ENCODE measurements at regions of chr5 and their contacts with region 1.

Region 1: DNA sequence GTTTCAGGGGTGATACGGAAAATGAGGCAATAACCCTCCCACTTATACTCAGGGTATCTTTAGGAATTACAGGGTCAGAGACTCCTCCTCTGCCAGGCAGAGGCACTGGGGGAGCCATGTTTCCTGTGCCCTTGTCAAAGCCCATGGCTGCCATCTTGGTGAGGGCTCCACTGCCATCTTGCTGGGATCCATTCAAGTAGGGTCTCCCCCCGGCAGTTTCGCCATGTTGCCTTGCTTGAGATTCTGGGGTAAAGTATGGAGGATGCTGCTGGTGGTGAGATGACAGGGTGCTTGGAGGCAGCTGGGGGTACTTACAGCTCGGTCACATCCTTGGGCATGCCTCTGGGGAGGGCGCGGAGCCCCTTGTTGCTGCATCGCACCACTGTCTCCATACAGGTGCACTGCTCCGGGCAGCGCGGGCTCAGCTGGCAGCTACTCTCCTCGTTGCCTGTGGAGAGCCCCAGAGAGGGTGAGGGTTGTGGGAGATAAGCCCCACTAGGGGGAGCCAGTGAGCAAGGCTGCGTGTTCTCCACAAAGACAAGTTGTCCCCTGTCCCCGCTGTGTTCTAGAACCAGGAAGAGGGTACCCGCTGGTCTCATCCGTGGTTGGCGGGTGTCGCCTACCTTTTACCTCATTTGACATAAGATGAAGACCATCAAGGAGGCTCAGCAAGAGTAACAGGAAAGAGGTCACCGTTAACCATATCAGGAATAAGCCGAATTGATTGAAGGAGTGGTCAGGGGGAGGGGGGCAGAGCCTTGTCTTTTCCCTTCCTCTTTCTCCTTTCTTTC is 169.0 kb upstream of the PANK3 start:
- DNase-seq: peak; percentile 17
- H3K4me3 Mint-ChIP-seq: no peak overlapping the region
- H3K27ac Mint-ChIP-seq: no peak overlapping the region
- H3K4me1 Mint-ChIP-seq: no peaks in the 10 kb centered on the region
- H3K27me3 Mint-ChIP-seq: peaks cover 4% of the 10 kb centered on the region

Region 2: DNA sequence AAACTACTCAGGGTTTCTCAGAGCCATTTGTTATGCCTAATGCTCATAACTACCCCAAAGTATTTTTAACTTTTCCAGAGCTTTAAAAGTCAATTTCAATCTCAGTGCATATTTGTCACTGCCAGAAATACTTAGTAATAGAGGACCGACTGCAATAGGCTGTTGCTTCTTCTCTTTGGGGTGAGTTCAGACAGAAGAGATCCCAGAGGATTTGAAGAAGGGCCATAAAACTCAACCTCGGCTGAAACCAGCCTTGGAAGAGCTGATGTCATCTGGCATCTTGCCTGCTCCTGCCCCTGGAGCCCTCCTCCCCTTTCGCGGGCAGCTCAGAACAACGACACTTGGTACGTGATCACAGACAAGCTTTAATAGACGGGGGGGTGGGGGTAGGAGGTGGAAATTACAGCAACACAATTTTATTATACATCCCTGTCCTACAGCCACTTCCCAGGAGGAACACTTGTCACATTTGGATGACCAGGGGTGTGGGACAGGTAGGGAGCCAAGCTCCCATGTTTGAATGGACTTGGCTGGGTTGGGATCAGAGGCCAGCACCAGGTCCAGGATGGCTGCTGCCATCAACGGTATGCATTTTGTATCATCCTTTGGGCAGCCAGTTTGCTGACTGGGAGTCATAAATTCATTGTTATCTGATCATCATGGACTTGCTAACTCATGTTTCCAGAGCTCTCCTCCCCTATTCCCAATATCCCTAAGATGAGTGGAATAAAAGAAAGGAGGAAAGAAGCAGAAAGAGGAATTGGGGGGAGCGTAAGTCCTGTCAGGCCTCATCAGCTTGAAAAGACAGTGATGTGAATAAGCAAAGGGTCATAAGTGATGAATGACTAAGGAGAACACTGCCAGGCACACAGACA is 17.6 kb after region 1 on chr5:
- intact Hi-C with region 1: no loop called
- DNase-seq: no peak
- H3K4me3 Mint-ChIP-seq: no peak overlapping the region
- H3K27ac Mint-ChIP-seq: no peak overlapping the region
- H3K4me1 Mint-ChIP-seq: no peaks in the 10 kb centered on the region
- H3K27me3 Mint-ChIP-seq: no peaks in the 10 kb centered on the region

Region 3: DNA sequence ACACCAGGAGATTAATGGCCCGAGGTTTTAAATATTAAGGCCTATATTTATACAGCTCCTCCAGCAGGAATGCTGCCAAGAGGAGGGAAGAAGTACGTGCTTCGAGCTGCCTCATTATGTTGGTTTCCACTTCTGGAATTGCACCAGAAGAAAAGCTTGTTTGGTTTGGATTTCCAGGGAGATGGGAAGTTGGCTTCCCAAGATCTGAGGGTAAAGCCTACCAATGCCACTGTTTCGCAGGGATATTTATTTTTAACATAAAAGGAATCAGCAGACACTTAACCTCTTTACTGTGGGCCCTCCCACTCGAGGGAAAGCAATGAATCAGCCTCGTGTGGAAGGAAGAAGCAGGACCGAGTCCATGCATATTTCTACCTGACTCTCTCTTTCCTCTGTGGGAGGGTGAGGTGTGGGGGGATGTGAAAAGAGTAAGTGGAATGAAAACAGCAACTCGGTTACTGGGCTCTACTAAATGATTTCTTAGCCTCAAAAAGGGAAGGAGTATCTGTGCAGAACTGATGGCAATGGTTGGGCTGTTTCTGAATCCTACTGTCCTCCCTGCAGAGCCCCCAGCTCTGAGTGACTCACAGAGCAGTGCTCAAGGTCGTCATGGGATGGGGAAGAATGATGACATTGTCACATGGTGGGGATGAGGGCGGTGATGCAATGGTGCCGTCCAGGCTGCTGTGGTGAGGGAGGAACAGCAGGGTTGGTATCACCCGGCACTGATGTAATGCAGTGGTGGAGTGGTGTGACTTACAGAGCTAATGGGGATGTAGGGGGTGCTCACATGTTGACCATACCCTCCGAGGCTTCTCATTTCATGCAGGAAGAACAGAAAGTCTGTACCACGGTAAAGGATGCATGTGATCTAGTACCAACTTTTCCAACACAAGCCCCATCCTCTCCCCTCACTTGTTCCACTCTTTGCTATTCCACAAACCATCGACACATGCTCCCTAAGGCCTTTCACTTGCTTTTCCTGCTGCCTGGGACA is 46.0 kb after region 1 on chr5:
- intact Hi-C with region 1: loop called (anchors 5 kb)
- DNase-seq: no peak
- H3K4me3 Mint-ChIP-seq: no peak overlapping the region
- H3K27ac Mint-ChIP-seq: peak overlapping the region; percentile 72
- H3K4me1 Mint-ChIP-seq: peaks cover 41% of the 10 kb centered on the region
- H3K27me3 Mint-ChIP-seq: no peaks in the 10 kb centered on the region

Region 4: GRCh38 chr5:168851902-168852321 is 103.7 kb after region 1 on chr5:
- intact Hi-C with region 1: loop called (anchors 10 kb)
- DNase-seq: peak; percentile 26
- H3K4me3 Mint-ChIP-seq: peak overlapping the region; percentile 54
- H3K27ac Mint-ChIP-seq: peak overlapping the region; percentile 77
- H3K4me1 Mint-ChIP-seq: peaks cover 20% of the 10 kb centered on the region
- H3K27me3 Mint-ChIP-seq: peaks cover 14% of the 10 kb centered on the region